AG04450 (cell line): ENCODE measurements at regions of chr3 and their contacts with region 1.

Region 1: GRCh38 chr3:49802719-49803464 is at the start of gene INKA1:
- DNase-seq: no peak
- H3K4me3 ChIP-seq: peak within 1 kb of the TSS; percentile 90
- H3K27ac ChIP-seq: peak within 1 kb of the TSS; percentile 77
- H3K27me3 ChIP-seq: no peaks in the 10 kb centered on the region
- CTCF ChIP-seq: peak; percentile 85
- polyA plus RNA-seq, gene INKA1: 1.9 and 2.8 TPM in 2 replicates

Region 2: DNA sequence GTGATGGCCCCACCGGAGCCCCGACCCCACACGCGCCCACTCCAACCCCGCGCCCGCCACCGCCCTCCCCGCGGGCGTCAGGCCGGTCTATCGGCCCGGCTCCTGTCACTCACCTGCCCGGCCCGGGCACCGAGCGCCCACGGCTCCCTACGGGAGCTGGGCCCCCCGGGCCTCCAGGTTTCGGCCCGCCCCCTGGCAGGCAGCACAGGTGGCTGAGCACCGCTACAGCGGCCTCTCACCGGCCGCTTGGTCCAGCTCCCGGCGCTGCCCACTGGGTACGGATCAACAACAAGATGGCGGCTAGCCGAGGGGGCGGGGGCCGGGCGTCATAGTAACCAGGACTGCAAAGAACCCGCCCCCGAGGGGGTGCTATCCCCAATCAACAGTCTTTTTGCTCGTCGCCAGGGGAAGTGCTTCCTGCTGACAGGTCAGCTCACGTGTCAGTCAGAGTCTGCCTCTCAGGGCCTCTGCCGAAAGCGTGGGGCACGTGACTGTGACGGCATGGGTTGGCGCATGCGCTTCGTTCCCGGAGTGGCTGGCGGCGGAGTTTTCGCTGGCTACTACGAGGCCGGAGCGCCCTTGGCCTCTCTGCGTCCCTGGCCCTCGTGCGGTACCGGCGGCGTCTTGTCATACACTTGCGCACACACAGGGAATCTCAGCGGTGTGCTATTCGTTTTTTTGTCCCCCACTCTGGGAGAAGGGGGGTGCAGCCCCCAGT is 16.5 kb before region 1 on chr3 and contains the start of gene IP6K1:
- CTCF ChIA-PET with region 1: interaction called, 12 read pairs
- POLR2A ChIA-PET with region 1: interaction called, 9 read pairs
- DNase-seq: peak; percentile 100
- H3K4me3 ChIP-seq: peak within 1 kb of the TSS; percentile 69
- H3K27ac ChIP-seq: peak within 1 kb of the TSS; percentile 80
- H3K27me3 ChIP-seq: no peaks in the 10 kb centered on the region
- CTCF ChIP-seq: no peak
- polyA plus RNA-seq, gene IP6K1: 40.4 and 53.5 TPM in 2 replicates

Region 3: GRCh38 chr3:49813497-49814174 is 10.7 kb after region 1 on chr3 and contains the start of gene UBA7:
- CTCF ChIA-PET with region 1: interaction called, 16 read pairs
- POLR2A ChIA-PET with region 1: interaction called, 16 read pairs
- DNase-seq: no peak
- H3K4me3 ChIP-seq: peak within 1 kb of the TSS; percentile 72
- H3K27ac ChIP-seq: peak within 1 kb of the TSS; percentile 1
- H3K27me3 ChIP-seq: no peaks in the 10 kb centered on the region
- CTCF ChIP-seq: no peak
- polyA plus RNA-seq, gene UBA7: 34.0 and 43.6 TPM in 2 replicates

Region 4: DNA sequence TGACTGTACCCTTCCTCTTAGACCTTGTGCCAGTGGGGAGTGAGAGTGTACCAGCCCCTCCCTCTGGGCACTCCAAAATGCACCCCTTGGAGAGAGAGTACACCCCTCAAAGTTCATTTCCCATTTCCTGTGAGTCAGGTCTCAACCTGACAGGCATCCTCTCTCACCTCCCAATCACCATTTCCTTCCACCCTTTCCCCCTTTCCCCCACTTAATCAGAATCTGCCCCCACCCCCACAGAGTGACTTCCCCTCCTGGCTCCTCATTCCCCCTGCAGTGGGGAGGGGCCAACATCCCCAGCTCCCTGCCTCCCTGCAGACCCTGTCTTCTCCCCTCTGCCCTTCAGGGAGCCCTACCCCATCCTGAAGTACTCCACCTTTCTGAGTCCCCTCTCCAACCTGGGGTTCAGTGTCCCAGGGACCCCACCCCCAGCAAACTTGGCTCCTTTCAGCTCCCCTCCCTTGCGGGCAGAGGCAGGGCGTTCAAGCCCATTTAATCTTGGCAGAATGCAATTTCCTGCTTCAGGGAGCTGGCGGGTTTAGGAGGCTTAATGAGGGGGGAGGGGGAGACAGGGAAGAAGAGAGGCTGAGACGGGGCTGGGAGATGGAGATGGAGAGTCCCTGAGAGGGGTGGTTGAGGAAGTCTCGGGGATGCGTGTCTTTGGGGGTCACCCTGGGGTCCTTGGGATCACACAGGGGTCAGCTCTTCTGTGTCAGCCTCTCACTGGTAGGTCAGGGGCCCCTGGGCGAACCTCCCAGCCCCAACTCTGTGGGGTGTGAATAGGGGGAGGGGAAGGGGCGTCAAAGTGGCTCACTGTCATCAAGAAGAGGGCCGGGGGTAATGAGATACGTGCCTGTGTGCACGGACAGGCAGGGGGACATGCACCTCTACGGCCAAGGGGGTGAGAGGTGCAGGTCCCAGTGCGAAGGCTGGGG is 335.6 kb after region 1 on chr3:
- CTCF ChIA-PET with region 1: no interaction called
- POLR2A ChIA-PET with region 1: no interaction called
- DNase-seq: no peak
- H3K4me3 ChIP-seq: no peak overlapping the region
- H3K27ac ChIP-seq: no peak overlapping the region
- H3K27me3 ChIP-seq: peaks cover 8% of the 10 kb centered on the region
- CTCF ChIP-seq: no peak